ENCODE measurements at regions of chr17 and their contacts with region 1.

Region 1: DNA sequence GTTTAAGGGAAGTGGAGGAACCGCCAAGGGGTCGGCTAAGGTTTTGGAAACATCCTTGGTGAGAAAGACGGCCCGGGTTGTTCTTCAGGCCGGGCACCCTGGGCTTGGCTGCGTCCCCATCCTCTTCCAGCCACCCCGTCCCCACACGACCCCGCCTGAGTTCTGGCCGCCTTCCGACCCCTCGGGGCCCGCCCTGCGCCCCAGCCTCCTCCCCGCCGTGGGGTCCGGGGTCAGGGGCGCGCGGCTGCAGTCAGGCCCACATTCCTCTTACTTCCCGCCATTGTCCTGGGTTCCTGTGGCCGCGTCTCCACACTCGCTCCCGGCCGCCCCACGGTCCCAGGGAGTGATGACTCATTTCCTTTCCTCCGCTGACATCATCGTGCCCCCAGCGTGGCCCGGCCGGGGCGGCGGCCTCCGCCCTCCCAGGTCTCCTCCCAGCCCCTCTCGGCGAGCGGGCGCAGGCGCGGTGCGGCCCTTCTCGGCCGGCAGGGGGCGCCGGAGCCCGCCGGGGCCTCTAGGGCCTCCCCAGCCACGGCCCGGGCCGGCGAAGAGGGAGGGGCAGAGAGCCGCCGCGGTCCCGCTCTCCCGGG is 59.6 kb downstream of the WSB1 start:
- DNase-seq: peak; percentile 19
- H3K4me3 ChIP-seq: peak overlapping the region; percentile 64
- CTCF ChIP-seq: peak; percentile 57

Region 2: GRCh38 chr17:27326585-27326984 is 27.0 kb before region 1 on chr17:
- CTCF ChIA-PET with region 1: no interaction called
- POLR2A ChIA-PET with region 1: no interaction called
- DNase-seq: no peak
- H3K4me3 ChIP-seq: no peak overlapping the region
- CTCF ChIP-seq: no peak

Region 3: GRCh38 chr17:27367121-27367991 is 13.8 kb after region 1 on chr17:
- CTCF ChIA-PET with region 1: interaction called, 27 read pairs
- POLR2A ChIA-PET with region 1: no interaction called
- DNase-seq: no peak
- H3K4me3 ChIP-seq: no peak overlapping the region
- CTCF ChIP-seq: no peak

Region 4: DNA sequence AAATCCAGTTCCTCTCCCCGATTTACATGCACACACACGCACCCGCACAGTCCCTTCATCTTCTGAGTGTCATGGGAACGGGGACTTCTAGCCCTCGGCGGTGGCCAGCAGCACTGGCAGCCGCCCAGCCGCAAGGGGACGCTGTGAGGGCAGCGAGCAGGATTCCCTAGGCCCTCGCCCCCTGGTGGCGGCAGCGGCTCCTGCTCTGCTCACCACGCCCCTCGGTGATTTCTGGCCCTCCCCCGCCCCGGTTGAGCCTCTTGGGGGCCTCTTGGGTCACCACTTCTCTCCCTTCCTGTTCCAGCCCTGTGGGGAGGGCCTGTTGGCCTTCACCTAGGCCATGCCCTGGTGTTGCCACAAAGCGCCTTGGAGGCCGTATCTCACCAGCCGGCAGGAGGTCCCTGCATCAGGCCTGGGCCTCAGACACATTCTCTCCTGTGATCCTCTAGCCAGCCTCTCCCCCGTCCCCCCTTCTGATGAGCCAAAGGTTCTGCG is 27.5 kb after region 1 on chr17:
- CTCF ChIA-PET with region 1: interaction called, 15 read pairs
- POLR2A ChIA-PET with region 1: no interaction called
- DNase-seq: no peak
- H3K4me3 ChIP-seq: no peak overlapping the region
- CTCF ChIP-seq: peak; percentile 77

Region 5: GRCh38 chr17:27430882-27431491 is 77.4 kb after region 1 on chr17:
- CTCF ChIA-PET with region 1: interaction called, 28 read pairs
- POLR2A ChIA-PET with region 1: no interaction called
- DNase-seq: no peak
- H3K4me3 ChIP-seq: no peak overlapping the region
- CTCF ChIP-seq: peak; percentile 83

Region 6: DNA sequence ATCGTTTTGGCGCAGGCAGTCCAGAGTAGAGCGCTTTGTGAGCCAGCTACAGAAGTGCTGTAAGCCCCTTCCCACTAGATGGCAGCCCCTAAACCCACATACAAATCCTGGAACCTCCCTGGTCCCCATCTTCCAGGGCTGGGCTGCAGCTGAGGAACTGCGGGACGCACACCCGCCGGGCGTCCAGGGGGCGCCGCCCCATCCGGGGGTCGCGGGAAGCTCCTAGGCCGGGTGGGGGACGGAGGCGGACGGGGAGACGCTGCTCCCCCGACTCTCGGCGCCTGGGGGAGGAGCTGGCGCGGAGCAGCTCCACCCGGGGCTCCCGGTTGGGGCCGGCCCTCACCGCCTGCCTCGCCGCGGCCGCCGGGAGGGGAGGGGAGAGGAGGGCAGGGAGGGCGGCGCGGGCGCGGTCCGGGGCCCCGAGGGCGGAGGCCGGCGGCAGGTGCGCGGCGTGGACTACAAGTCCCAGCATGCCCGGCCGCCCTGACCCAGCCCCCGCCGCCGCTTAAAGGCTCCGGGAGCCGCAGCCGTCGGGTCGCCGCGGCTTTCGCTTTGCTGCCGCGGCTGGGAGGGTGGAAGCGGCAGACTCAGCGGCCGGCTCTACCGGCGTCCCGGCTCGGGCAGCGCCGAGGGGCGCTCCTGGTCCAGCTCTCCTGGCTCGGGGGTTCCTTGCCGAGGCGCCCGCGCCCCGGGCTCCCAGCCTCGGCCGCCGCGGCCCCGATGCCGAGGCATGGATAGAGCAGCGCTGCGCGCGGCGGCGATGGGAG is 102.5 kb after region 1 on chr17 and contains the start of gene KSR1:
- CTCF ChIA-PET with region 1: interaction called, 15 read pairs
- POLR2A ChIA-PET with region 1: interaction called, 4 read pairs
- DNase-seq: no peak
- H3K4me3 ChIP-seq: peak within 1 kb of the TSS; percentile 69
- CTCF ChIP-seq: peak; percentile 47

Region 7: DNA sequence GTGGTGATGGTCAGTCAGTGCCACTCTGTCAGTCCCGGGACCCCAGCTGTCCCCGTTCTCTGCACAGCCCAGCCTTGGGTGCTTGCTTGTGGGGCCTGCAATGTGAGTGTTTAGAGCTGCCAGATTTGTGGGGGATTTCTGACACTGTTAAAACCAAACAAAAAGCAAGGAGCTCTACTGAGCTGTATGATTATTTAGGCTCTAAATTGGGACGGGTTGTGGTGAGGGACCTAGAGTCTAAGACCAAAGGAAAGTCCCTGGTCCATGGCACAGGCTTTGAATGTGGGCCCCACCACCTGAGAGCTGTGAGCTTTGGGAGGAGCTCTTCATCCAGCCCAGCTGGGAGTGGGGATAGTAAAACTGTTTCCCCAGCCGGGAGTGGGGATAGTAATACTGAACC is 166.0 kb after region 1 on chr17:
- CTCF ChIA-PET with region 1: no interaction called
- POLR2A ChIA-PET with region 1: no interaction called
- DNase-seq: no peak
- H3K4me3 ChIP-seq: no peak overlapping the region
- CTCF ChIP-seq: no peak

Region 8: DNA sequence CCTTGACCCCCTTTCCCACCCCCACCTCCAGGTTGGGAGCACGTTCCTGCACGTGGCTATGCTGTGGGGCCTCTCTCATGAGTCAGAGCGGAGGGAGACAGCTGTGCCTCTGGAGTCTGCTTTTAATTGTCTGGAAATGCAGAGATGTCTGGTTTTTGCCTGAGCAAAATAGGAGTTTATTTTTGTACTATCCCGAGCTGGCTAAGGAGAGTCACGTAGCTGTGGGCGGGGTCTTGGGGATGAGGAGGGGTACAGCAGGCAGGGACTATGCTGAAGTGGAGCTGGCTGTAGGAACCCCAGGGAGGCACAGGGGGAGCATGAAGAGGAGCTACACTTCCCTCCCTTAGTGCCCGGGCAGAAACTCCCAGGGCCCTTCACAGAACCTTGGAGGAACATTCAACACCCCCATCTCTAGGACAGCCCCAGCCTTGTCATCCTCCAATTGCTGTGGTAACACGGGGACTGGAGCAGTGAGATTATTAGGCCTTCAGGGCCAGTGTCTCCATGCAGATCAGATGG is 232.7 kb after region 1 on chr17:
- CTCF ChIA-PET with region 1: interaction called, 634 read pairs
- POLR2A ChIA-PET with region 1: no interaction called
- DNase-seq: peak; percentile 68
- H3K4me3 ChIP-seq: no peak overlapping the region
- CTCF ChIP-seq: no peak

Region 9: DNA sequence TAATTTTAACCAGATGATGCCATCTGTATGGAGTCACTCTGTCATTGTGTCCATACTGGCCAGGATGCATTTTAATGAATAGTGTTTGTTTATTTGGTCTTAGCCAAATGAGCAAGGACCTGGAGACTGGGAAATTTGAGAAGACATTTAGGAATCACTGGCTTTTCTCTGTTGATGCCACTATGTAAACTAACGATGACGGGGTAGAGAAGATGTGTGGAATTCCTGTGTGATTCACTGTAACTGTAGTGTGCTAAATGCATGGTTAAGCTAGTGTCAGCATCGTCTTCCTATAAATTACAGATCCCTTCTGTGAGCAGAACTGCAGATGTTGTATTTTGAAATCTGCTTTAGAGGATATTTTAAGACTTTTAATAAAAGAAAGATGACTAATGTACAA is 380.2 kb after region 1 on chr17:
- CTCF ChIA-PET with region 1: no interaction called
- POLR2A ChIA-PET with region 1: no interaction called
- DNase-seq: no peak
- H3K4me3 ChIP-seq: no peak overlapping the region
- CTCF ChIP-seq: no peak